ENCODE measurements at regions of chr6 and their contacts with region 1.

Region 1: GRCh38 chr6:14671261-14671681 is 553.7 kb downstream of the CD83 start:
- DNase-seq: no peak
- ATAC-seq: no peak
- H3K4me3 Mint-ChIP-seq: no peak overlapping the region
- H3K27ac Mint-ChIP-seq: no peak overlapping the region
- H3K4me1 Mint-ChIP-seq: peaks cover 42% of the 10 kb centered on the region
- H3K27me3 Mint-ChIP-seq: no peaks in the 10 kb centered on the region

Region 2: GRCh38 chr6:14573703-14574306 is 97.5 kb before region 1 on chr6:
- CTCF ChIA-PET with region 1: no interaction called
- POLR2A ChIA-PET with region 1: no interaction called
- intact Hi-C with region 1: no loop called
- DNase-seq: no peak
- ATAC-seq: no peak
- H3K4me3 Mint-ChIP-seq: no peak overlapping the region
- H3K27ac Mint-ChIP-seq: no peak overlapping the region
- H3K4me1 Mint-ChIP-seq: peaks cover 1% of the 10 kb centered on the region
- H3K27me3 Mint-ChIP-seq: no peaks in the 10 kb centered on the region

Region 3: DNA sequence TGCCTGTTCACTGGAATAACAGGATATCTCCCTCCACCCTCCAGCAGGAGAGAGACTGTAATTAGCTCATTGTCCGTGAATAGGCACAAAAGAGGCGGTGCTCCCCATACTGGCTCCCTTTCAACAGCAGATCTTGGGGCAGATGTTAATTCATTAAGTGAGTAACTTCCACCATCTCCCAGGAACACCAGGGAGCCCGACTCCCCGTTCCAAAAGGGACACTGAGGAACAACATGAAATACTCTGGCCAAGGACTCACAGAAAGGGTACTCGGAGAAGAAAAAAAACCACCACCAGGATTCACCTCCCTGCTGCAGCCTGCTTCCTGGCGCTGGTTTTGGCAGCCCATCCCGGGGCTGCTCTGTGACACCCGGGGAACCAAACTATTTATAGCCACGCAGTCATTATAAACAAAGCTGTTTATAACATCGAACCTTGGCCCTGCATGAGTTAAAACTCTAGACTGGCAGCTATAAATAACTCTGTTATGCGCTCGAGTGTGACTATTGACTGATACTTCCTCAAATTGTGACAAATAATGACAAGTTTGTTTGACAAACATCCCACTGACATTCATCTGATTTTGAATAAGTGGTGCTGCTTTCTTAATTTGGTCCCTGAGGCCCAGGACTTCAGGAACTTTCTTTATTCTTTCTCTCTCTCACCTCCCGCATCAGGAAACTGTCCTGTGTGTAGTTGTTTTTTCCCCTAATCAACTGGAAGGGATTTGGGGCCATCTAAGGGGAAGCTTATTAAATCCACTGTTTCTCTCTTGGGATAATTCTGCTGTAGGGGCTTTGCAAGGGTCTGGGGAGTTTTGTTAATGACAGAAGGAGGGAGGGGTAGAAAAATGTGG is 32.1 kb before region 1 on chr6:
- CTCF ChIA-PET with region 1: no interaction called
- POLR2A ChIA-PET with region 1: interaction called, 3 read pairs
- intact Hi-C with region 1: loop called in 1 of 2 experiments (anchors 5 kb)
- DNase-seq: no peak
- ATAC-seq: no peak
- H3K4me3 Mint-ChIP-seq: no peak overlapping the region
- H3K27ac Mint-ChIP-seq: peak overlapping the region; percentile 56
- H3K4me1 Mint-ChIP-seq: peaks cover 65% of the 10 kb centered on the region
- H3K27me3 Mint-ChIP-seq: no peaks in the 10 kb centered on the region

Region 4: DNA sequence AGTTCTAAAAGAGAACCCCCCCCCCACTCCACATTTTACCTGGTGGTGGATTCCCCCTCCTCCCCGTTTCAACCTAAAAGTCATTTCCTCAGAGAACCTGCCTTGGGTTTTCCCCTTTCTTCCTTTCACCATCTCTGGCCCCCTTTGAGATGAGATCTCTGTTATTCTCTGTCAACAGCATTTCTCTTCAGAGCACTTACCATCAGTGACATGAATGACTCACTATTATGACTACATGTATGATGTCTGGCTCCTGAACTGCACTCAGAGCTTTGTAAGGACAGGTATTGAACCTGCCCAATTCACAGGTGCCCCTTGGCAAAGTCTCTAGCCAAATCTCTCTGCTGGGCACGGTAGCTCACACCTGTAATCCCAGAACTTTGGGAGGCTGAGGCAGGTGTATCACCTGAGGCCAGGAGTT is 513.2 kb after region 1 on chr6:
- CTCF ChIA-PET with region 1: no interaction called
- POLR2A ChIA-PET with region 1: no interaction called
- intact Hi-C with region 1: loop called in 1 of 2 experiments (anchors 10 kb)
- DNase-seq: peak; percentile 62
- ATAC-seq: peak; percentile 98
- H3K4me3 Mint-ChIP-seq: peak overlapping the region; percentile 23
- H3K27ac Mint-ChIP-seq: peak overlapping the region; percentile 96
- H3K4me1 Mint-ChIP-seq: peaks cover 23% of the 10 kb centered on the region
- H3K27me3 Mint-ChIP-seq: no peaks in the 10 kb centered on the region

Measured in activated CD4-positive, alpha-beta T cell treated with anti-CD3 and anti-CD28 coated beads for 36 hours (primary cell).